ENCODE measurements at regions of chr1 and their contacts with region 1.

Region 1: GRCh38 chr1:117753654-117754054 is 147.8 kb downstream of the TENT5C start:
- DNase-seq: peak; percentile 85
- ATAC-seq: peak; percentile 76
- H3K4me3 ChIP-seq: no peak overlapping the region
- H3K27ac ChIP-seq: peak overlapping the region; percentile 64; the same call in 1 of the 2 replicates
- H3K4me1 ChIP-seq: peaks cover 14% of the 10 kb centered on the region
- H3K27me3 ChIP-seq: no peaks in the 10 kb centered on the region
- CTCF ChIP-seq: no peak
- POLR2A ChIP-seq: no peak
- RAD21 ChIP-seq: no peak; the same call in 1 of the 2 replicates

Region 2: GRCh38 chr1:117695796-117696490 is 57.7 kb before region 1 on chr1:
- CTCF ChIA-PET with region 1: interaction called, 7 read pairs
- POLR2A ChIA-PET with region 1: no interaction called
- dilution Hi-C with region 1: no loop called
- in situ Hi-C with region 1: no loop called
- intact Hi-C with region 1: loop called (anchors 2 kb)
- DNase-seq: peak; percentile 96
- ATAC-seq: peak; percentile 91
- H3K4me3 ChIP-seq: peak overlapping the region; percentile 26; the same call in 1 of the 2 replicates
- H3K27ac ChIP-seq: peak overlapping the region; percentile 89
- H3K4me1 ChIP-seq: peaks cover 21% of the 10 kb centered on the region
- H3K27me3 ChIP-seq: no peaks in the 10 kb centered on the region
- CTCF ChIP-seq: no peak
- POLR2A ChIP-seq: peak; percentile 19; the same call in 1 of the 2 replicates
- RAD21 ChIP-seq: no peak

Region 3: GRCh38 chr1:117710710-117711109 is 42.9 kb before region 1 on chr1:
- CTCF ChIA-PET with region 1: no interaction called
- POLR2A ChIA-PET with region 1: no interaction called
- dilution Hi-C with region 1: no loop called
- in situ Hi-C with region 1: no loop called
- intact Hi-C with region 1: no loop called
- DNase-seq: no peak
- ATAC-seq: no peak
- H3K4me3 ChIP-seq: no peak overlapping the region
- H3K27ac ChIP-seq: no peak overlapping the region
- H3K4me1 ChIP-seq: no peaks in the 10 kb centered on the region
- H3K27me3 ChIP-seq: no peaks in the 10 kb centered on the region
- CTCF ChIP-seq: peak; percentile 37
- POLR2A ChIP-seq: no peak
- RAD21 ChIP-seq: peak; percentile 49

Region 4: GRCh38 chr1:118021668-118022067 is 268.0 kb after region 1 on chr1:
- CTCF ChIA-PET with region 1: no interaction called
- POLR2A ChIA-PET with region 1: no interaction called
- dilution Hi-C with region 1: no loop called
- in situ Hi-C with region 1: no loop called
- intact Hi-C with region 1: no loop called
- DNase-seq: no peak
- ATAC-seq: no peak
- H3K4me3 ChIP-seq: no peak overlapping the region
- H3K27ac ChIP-seq: no peak overlapping the region
- H3K4me1 ChIP-seq: no peaks in the 10 kb centered on the region
- H3K27me3 ChIP-seq: peaks cover 1% of the 10 kb centered on the region; the same call in 1 of the 2 replicates
- CTCF ChIP-seq: no peak
- POLR2A ChIP-seq: no peak
- RAD21 ChIP-seq: no peak